ENCODE measurements at regions of chr9 and their contacts with region 1.

Region 1: GRCh38 chr9:120477521-120478001 is 102.4 kb downstream of the CDK5RAP2 start:
- DNase-seq: peak; percentile 83
- H3K4me3 ChIP-seq: no peak overlapping the region
- H3K27ac ChIP-seq: no peak overlapping the region
- H3K27me3 ChIP-seq: no peaks in the 10 kb centered on the region
- CTCF ChIP-seq: peak; percentile 100

Region 2: DNA sequence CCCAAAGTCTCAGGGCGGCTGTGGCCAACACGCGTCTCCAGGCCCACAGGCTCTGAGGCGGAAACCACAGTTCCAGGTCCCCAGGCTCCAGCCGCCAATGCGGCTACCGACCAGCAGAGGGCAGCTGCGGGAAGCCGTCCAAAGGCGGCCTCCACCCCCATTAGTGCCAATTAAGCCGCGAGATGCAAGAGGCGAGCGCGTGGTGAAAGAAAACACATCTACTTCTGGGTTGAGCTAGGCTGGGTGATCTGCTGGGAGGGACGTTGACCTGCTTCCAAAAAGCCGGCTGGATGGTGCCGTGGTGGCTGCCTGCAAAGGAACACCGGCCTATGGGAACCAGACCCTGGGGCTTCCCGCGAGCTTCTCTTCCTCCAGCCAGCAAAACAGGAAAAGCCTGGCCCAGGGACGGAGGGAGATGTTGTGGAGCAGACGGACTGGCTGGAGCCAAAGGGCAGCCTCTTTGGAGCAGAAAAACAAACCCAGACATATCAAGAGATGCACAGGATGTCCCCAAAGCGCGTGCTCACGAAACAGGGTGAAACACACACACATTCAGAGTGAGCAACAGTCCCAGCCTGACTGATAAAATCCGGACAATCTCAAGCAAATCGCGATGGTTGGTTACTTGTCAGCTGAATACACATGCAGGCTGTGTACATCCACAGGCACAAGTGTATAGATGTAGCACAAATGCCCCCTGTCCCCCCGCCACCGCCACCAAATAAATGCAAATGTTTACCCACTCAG is 921.3 kb before region 1 on chr9:
- CTCF ChIA-PET with region 1: interaction called, 24 read pairs
- POLR2A ChIA-PET with region 1: no interaction called
- DNase-seq: no peak
- H3K4me3 ChIP-seq: peak overlapping the region; percentile 43
- H3K27ac ChIP-seq: no peak overlapping the region
- H3K27me3 ChIP-seq: no peaks in the 10 kb centered on the region
- CTCF ChIP-seq: peak; percentile 72

Region 3: DNA sequence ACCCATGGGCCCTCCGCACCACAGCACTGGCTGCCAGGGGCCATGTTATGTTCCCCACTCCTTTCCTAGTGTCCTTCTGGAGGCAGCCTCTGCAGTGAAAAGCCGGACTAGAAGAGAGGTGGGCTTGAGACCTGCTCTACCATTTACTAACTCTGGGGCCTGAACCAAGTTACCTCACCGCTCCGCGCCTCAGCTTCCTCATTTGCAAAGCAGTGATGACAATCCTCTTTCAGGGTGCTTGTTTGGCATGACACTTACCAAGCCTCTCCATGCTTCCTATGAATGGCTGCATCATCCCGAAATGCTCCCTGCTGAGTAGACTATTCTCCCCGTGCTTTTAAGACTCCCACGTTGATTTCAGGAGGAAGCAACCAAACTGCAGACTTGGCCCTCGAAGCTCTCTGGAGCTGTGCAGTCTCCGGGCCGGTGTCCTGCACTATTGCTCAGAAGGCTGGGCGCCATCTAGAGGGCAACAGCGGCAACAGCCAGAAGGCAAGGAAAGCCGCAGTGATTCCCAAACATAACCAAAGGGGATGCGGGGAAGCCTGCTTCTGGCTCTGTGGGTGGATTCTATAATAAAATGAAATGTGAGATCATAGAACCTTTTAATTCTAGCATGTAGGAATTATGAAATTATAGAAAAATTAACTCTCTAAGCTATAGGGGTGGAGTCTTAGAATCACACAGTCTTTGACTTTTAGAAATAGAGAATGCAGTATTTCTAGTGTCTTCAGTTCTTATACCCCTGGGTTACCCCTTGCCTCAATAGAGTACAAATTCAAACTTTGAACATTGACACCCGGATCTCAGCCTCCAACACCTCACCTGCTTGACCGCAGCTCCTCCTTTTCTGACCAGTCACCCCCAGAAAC is 508.5 kb before region 1 on chr9:
- CTCF ChIA-PET with region 1: interaction called, 37 read pairs
- POLR2A ChIA-PET with region 1: no interaction called
- DNase-seq: no peak
- H3K4me3 ChIP-seq: no peak overlapping the region
- H3K27ac ChIP-seq: no peak overlapping the region
- H3K27me3 ChIP-seq: no peaks in the 10 kb centered on the region
- CTCF ChIP-seq: peak; percentile 99

Region 4: GRCh38 chr9:119986213-119986612 is 491.3 kb before region 1 on chr9:
- CTCF ChIA-PET with region 1: no interaction called
- POLR2A ChIA-PET with region 1: no interaction called
- DNase-seq: no peak
- H3K4me3 ChIP-seq: no peak overlapping the region
- H3K27ac ChIP-seq: no peak overlapping the region
- H3K27me3 ChIP-seq: no peaks in the 10 kb centered on the region
- CTCF ChIP-seq: no peak

Region 5: DNA sequence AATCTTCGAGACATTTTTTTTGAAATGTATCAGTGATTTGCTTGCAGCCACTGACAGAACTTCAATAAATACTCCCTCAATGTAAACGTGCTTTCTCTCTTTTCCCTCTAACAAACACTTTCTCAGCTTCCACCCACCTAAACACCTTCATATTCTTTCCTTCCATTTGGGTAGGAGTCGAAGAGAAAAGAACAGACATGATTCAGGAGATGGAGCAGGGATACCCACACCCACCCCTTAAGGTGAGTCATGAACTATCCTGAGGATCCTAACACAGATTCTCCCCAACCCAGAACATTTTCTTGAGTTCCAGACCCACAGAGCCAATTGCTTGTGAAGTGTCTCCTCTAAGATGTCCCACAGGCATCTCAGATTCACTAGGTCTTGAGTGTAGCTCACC is 386.4 kb before region 1 on chr9:
- CTCF ChIA-PET with region 1: no interaction called
- POLR2A ChIA-PET with region 1: no interaction called
- DNase-seq: no peak
- H3K4me3 ChIP-seq: no peak overlapping the region
- H3K27ac ChIP-seq: no peak overlapping the region
- H3K27me3 ChIP-seq: no peaks in the 10 kb centered on the region
- CTCF ChIP-seq: no peak

Region 6: DNA sequence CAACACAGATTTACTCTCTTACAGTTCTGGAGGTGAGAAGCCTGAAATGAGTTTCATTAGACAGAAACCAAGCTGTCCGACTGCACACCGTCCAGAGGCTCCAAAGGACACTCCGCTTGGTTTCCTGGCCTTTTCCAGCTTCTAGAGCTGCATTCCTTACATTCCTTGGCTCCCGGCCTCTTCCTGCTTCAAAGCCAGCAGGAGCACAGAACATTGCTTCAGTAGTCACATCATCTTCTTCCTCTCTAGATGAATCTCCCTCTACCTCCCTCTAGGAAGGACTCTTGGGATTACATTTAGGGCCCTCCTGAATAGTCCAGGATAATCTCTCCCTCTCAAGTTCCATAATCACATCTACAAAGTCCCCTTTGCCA is 110.9 kb before region 1 on chr9:
- CTCF ChIA-PET with region 1: interaction called, 23 read pairs
- POLR2A ChIA-PET with region 1: no interaction called
- DNase-seq: peak; percentile 75
- H3K4me3 ChIP-seq: no peak overlapping the region
- H3K27ac ChIP-seq: peak overlapping the region; percentile 39
- H3K27me3 ChIP-seq: peaks cover under 1% of the 10 kb centered on the region
- CTCF ChIP-seq: peak; percentile 69

Region 7: GRCh38 chr9:120454467-120454866 is 23.1 kb before region 1 on chr9:
- CTCF ChIA-PET with region 1: interaction called, 10 read pairs
- POLR2A ChIA-PET with region 1: no interaction called
- DNase-seq: no peak
- H3K4me3 ChIP-seq: no peak overlapping the region
- H3K27ac ChIP-seq: no peak overlapping the region
- H3K27me3 ChIP-seq: no peaks in the 10 kb centered on the region
- CTCF ChIP-seq: no peak

Region 8: GRCh38 chr9:120531683-120532300 is 54.2 kb after region 1 on chr9:
- CTCF ChIA-PET with region 1: interaction called, 10 read pairs
- POLR2A ChIA-PET with region 1: no interaction called
- DNase-seq: no peak
- H3K4me3 ChIP-seq: no peak overlapping the region
- H3K27ac ChIP-seq: no peak overlapping the region
- H3K27me3 ChIP-seq: no peaks in the 10 kb centered on the region
- CTCF ChIP-seq: peak; percentile 59

Region 9: DNA sequence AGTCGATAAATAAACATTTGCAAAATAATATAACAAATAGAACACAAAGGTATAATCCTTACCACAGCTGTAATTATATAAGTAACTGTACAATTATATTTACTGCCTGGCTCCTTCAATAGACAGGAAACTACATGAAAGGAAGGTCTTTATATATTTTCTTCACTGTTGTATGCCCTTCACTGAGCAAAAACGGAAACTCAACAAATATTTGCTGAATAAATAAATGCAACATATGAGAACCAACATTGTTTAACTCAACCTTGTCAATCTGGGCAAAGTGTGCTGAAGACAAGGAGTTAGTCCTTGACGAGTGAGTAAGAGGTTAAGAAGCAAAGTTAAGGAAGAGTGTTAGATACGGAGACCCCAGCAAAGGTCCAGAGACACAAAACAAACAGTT is 342.5 kb after region 1 on chr9:
- CTCF ChIA-PET with region 1: no interaction called
- POLR2A ChIA-PET with region 1: no interaction called
- DNase-seq: no peak
- H3K4me3 ChIP-seq: no peak overlapping the region
- H3K27ac ChIP-seq: no peak overlapping the region
- H3K27me3 ChIP-seq: no peaks in the 10 kb centered on the region
- CTCF ChIP-seq: no peak

Measured in AG04450 (cell line).